Activated CD8-positive, alpha-beta memory T cell treated with anti-CD3 and anti-CD28 coated beads, Interleukin-2, amount 10 ng/mL, durations not matched to agents 7 days and 5 days (primary cell): ENCODE measurements at regions of chr22 and their contacts with region 1.

Region 1: DNA sequence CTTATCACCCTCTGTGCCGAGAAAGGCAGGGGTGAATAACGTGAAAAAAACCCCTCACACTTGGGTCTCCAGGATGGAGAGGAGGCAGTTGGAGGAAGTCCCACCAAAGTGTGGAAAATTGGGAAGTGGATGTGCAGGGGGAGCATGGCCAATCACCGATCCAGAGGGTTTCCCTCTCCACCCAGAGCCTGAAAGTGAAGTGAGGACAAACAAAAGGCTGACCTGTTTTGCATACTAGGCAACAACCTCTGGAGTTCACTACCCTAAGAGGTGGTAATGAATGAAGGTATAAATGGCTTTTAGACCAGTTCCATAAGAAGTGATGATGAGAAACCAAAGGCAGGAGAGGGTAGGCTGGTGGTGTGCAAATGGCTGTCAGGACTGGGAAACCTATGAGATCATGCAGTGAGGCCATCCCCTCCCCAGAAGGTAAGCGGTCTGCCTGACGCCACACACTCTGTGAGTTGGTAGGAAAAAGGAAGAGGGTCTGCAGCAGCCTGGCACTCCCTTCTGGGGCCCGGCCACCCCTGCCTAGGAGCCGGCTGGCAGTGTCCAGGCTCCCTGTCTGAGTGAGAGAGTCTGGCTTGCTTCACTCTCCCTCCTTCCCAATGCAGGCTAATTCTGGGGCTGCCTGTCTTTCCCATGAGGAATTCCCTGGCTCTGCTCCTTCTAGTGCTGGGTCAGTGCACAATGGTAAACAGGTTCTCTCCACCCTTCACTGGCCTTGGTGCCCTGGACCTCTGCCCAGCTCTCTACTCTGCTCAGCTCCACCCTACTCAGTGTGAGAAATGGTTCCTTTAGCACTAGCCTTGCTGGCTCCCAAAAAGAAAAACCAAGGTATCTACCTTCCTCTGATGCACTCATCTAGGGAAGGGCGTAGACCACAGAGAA is 15.6 kb downstream of the TBC1D10A start:
- DNase-seq: no peak
- ATAC-seq: no peak
- H3K4me3 Mint-ChIP-seq: no peak overlapping the region
- H3K27ac Mint-ChIP-seq: peak overlapping the region; percentile 60
- H3K4me1 Mint-ChIP-seq: peaks cover 95% of the 10 kb centered on the region
- H3K27me3 Mint-ChIP-seq: no peaks in the 10 kb centered on the region

Region 2: DNA sequence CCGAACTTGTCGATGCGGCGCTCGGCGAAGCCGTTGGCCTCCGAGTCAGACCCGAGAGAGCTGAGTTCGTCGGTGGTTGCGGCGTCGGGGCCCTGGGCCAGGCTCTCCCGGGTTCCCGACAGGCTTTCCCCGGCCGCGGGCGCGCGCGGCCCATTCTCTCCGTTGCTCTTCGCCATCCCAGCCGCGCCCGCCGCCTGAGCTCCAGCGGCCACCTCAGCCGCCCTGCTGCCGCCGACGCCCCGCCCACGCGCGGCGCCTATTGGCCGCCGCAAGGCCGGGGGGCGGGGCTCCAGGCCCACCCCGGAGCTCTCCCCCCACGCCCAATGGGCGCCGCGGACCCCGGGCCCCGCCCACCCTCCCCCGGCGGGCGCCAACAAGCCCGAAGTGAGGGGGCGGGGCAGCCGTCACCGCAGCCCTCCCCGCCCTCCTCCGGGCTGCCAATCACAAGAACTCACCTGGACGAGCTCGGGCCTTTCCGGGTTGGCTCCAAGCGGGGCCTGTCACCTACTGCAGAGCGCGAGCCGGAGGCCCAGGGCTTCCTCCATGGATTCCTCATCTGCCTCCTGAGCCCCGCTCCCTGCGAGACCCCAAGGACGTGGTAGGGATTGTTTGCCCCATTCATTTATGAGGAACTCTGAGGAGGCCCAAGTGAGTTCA is 15.7 kb after region 1 on chr22 and contains the start of gene TBC1D10A:
- CTCF ChIA-PET with region 1: interaction called, 37 read pairs
- DNase-seq: peak; percentile 95
- ATAC-seq: peak; percentile 90
- H3K4me3 Mint-ChIP-seq: peak within 1 kb of the TSS; percentile 88
- H3K27ac Mint-ChIP-seq: peak within 1 kb of the TSS; percentile 80
- H3K4me1 Mint-ChIP-seq: peaks cover 42% of the 10 kb centered on the region
- H3K27me3 Mint-ChIP-seq: no peaks in the 10 kb centered on the region
- total RNA-seq, gene TBC1D10A: 32.2 to 48.1 TPM